ENCODE measurements at regions of chr12 and their contacts with region 1.

Region 1: DNA sequence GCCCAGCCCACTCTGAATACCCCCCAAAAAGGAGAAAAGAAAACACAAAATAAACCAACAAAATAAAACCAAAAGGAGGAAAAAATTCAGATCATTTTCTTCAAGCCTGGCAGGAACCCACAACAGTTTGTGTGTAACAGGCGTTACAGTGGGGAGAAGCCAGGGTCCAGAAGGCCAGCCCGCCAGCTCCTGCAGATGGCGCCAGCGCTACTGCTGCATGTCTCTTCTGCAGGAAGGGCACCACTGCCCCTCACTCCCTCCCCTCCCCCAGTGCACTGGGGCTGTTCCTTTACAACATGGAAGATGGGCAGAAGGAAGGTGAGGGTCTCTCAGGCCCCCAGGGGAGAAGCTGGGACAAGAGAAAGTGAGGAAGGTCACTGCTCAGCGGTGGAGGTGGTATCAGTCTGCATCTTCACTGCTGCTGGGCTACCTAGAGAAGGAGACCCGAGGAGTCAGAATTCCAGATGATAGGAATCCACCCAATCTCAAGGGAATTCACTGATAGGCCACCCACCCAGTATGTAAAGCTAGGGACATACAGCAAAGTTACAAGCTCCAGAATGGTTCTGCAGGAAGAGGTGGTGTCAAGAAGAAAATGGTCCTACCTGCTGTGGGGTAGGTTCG is 2.3 kb upstream of the NOP2 start:
- DNase-seq: peak; percentile 66
- ATAC-seq: no peak
- H3K4me3 ChIP-seq: no peak overlapping the region
- H3K4me3 Mint-ChIP-seq: no peak overlapping the region
- H3K27ac ChIP-seq: no peak overlapping the region
- H3K27ac Mint-ChIP-seq: peak overlapping the region; percentile 46
- H3K4me1 ChIP-seq: peaks cover 7 to 22% of the 10 kb centered on the region in 2 donors
- H3K4me1 Mint-ChIP-seq: peaks cover 34% of the 10 kb centered on the region
- H3K27me3 ChIP-seq: no peaks in the 10 kb centered on the region
- H3K27me3 Mint-ChIP-seq: no peaks in the 10 kb centered on the region
- CTCF ChIP-seq: peak; percentile 65

Region 2: GRCh38 chr12:6582196-6582595 is 11.8 kb after region 1 on chr12:
- CTCF ChIA-PET with region 1: interaction called, 11 read pairs
- POLR2A ChIA-PET with region 1: no interaction called
- intact Hi-C with region 1: no loop called
- DNase-seq: no peak
- ATAC-seq: no peak
- H3K4me3 ChIP-seq: no peak overlapping the region
- H3K4me3 Mint-ChIP-seq: no peak overlapping the region
- H3K27ac ChIP-seq: no peak overlapping the region
- H3K27ac Mint-ChIP-seq: no peak overlapping the region
- H3K4me1 ChIP-seq: no peaks in the 10 kb centered on the region
- H3K4me1 Mint-ChIP-seq: no peaks in the 10 kb centered on the region
- H3K27me3 ChIP-seq: no peaks in the 10 kb centered on the region
- H3K27me3 Mint-ChIP-seq: no peaks in the 10 kb centered on the region
- CTCF ChIP-seq: peak; percentile 17

Region 3: GRCh38 chr12:6607751-6608591 is 37.6 kb after region 1 on chr12:
- CTCF ChIA-PET with region 1: interaction called, 3 read pairs
- POLR2A ChIA-PET with region 1: no interaction called
- intact Hi-C with region 1: loop called (anchors 2 kb)
- DNase-seq: peak; percentile 90
- ATAC-seq: peak; percentile 20
- H3K4me3 ChIP-seq: no peak overlapping the region
- H3K4me3 Mint-ChIP-seq: no peak overlapping the region
- H3K27ac ChIP-seq: peak overlapping the region; percentile 90 to 95
- H3K27ac Mint-ChIP-seq: no peak overlapping the region
- H3K4me1 ChIP-seq: peaks cover 56 to 63% of the 10 kb centered on the region in 2 donors
- H3K4me1 Mint-ChIP-seq: peaks cover 58% of the 10 kb centered on the region
- H3K27me3 ChIP-seq: no peaks in the 10 kb centered on the region
- H3K27me3 Mint-ChIP-seq: no peaks in the 10 kb centered on the region
- CTCF ChIP-seq: no peak

Measured in B cell (primary cell).